Naive thymus-derived CD4-positive, alpha-beta T cell (primary cell): ENCODE measurements at regions of chr3 and their contacts with region 1.

Region 1: GRCh38 chr3:185282696-185283394 is 29.0 kb upstream of the EHHADH start:
- DNase-seq: peak; percentile 80 to 95 (median 89)
- ATAC-seq: peak; percentile 99
- H3K4me3 ChIP-seq: peak overlapping the region; percentile 91
- H3K4me3 Mint-ChIP-seq: peak overlapping the region; percentile 89 to 100 (median 94)
- H3K27ac ChIP-seq: peak overlapping the region; percentile 59
- H3K27ac Mint-ChIP-seq: peak overlapping the region; percentile 77 to 98 (median 93)
- H3K4me1 ChIP-seq: peaks cover 5 to 12% of the 10 kb centered on the region in 2 donors
- H3K4me1 Mint-ChIP-seq: peaks cover 15 to 33% (median 19%) of the 10 kb centered on the region in 7 donors
- H3K27me3 ChIP-seq: no peaks in the 10 kb centered on the region
- H3K27me3 Mint-ChIP-seq: peaks cover 9 to 25% (median 21%) of the 10 kb centered on the region in 5 donors

Region 2: DNA sequence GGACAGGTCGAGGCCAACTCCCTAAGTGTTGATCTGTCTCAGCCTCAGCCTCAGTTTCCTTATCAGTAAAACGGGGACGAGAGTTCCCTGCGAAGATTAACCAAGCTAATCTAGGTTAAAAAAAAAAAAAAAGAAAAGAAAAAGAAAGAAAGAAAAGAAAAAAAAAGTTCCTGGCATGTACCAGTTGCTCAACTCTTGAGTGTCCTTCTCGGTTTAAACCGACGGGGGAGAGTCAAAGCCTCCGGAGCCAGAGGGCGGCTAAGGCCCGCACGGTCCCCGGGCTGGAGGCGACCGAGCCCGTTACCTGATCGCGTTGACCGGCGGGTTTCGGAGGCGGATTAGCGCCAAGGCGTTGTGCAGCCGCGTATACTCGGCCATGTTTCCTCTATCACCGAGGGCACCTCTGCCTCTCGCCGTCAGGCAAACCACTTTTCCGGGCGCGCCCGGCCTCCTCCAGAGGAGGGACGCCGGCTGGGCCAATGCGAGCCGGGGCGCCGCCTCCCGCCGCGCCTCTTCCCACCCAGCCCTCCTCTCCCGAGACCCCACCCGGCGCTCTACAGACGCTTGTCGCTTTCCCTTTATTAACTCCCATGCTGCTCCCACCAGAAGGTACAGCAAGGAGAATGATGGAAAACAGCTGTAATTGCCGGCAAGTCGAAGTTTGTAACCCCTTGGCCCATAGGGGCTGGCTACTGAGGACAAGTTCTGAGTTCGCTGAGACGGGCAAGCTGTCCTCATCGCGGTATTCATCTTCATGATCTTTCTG is 29.0 kb before region 1 on chr3 and contains the start of gene EHHADH:
- CTCF ChIA-PET with region 1: no interaction called
- POLR2A ChIA-PET with region 1: no interaction called
- intact Hi-C with region 1: loop called in 1 of 2 experiments (anchors 1 kb)
- DNase-seq: peak; percentile 8 to 56 (median 38)
- ATAC-seq: peak; percentile 92
- H3K4me3 ChIP-seq: peak within 1 kb of the TSS; percentile 64
- H3K4me3 Mint-ChIP-seq: peak within 1 kb of the TSS; percentile 66 to 85 (median 78)
- H3K27ac ChIP-seq: peak within 1 kb of the TSS; percentile 57
- H3K27ac Mint-ChIP-seq: peak within 1 kb of the TSS in 7 of 9 donors; percentile 27 to 73 (median 60)
- H3K4me1 ChIP-seq: no peaks in the 10 kb centered on the region
- H3K4me1 Mint-ChIP-seq: peaks cover 0 to 11% (median 6%) of the 10 kb centered on the region in 7 donors
- H3K27me3 ChIP-seq: no peaks in the 10 kb centered on the region
- H3K27me3 Mint-ChIP-seq: peaks cover 6 to 36% (median 6%) of the 10 kb centered on the region in 5 donors
- total RNA-seq, gene EHHADH: 0.45 to 1.7 (median 1.3) TPM

Region 3: DNA sequence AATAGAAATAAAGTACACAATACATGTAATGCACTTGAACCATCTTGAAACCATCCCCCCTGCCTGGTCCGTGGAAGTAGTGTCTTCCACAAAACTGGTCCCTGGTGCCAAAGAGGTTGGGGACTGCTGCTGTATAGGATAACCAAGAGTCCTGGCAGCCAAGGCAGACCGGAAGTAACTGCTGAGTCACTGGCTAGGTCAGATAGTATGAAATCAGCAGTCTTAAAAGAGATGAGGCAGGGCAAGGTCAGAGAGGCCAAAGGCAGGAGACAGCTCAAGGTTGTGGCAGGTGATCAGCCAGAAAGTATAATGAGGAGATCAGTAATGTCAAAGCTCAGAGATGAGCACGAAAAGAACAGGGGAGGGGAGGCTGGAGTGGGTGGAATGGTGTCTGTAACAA is 140.3 kb after region 1 on chr3:
- CTCF ChIA-PET with region 1: no interaction called
- POLR2A ChIA-PET with region 1: no interaction called
- intact Hi-C with region 1: no loop called
- DNase-seq: no peak
- ATAC-seq: no peak
- H3K4me3 ChIP-seq: no peak overlapping the region
- H3K4me3 Mint-ChIP-seq: no peak overlapping the region
- H3K27ac ChIP-seq: no peak overlapping the region
- H3K27ac Mint-ChIP-seq: no peak overlapping the region
- H3K4me1 ChIP-seq: no peaks in the 10 kb centered on the region
- H3K4me1 Mint-ChIP-seq: peaks cover 0 to 7% (median 0%) of the 10 kb centered on the region in 7 donors
- H3K27me3 ChIP-seq: no peaks in the 10 kb centered on the region
- H3K27me3 Mint-ChIP-seq: peaks cover 0 to 18% (median 15%) of the 10 kb centered on the region in 5 donors